Naive thymus-derived CD4-positive, alpha-beta T cell (primary cell): ENCODE measurements at regions of chr7 and their contacts with region 1.

Region 1: GRCh38 chr7:36001546-36001945 is 151.5 kb upstream of the EEPD1 start:
- DNase-seq: no peak
- ATAC-seq: no peak
- H3K4me3 ChIP-seq: no peak overlapping the region
- H3K4me3 Mint-ChIP-seq: no peak overlapping the region
- H3K27ac ChIP-seq: no peak overlapping the region
- H3K27ac Mint-ChIP-seq: no peak overlapping the region
- H3K4me1 ChIP-seq: no peaks in the 10 kb centered on the region
- H3K4me1 Mint-ChIP-seq: peaks cover 0 to 6% (median 6%) of the 10 kb centered on the region in 7 donors
- H3K27me3 ChIP-seq: no peaks in the 10 kb centered on the region
- H3K27me3 Mint-ChIP-seq: peaks cover 0 to 10% (median 0%) of the 10 kb centered on the region in 5 donors

Region 2: GRCh38 chr7:36109013-36109627 is 107.6 kb after region 1 on chr7:
- CTCF ChIA-PET with region 1: no interaction called
- POLR2A ChIA-PET with region 1: no interaction called
- intact Hi-C with region 1: loop called in 1 of 2 experiments (anchors 10 kb)
- DNase-seq: no peak
- ATAC-seq: no peak
- H3K4me3 ChIP-seq: no peak overlapping the region
- H3K4me3 Mint-ChIP-seq: no peak overlapping the region
- H3K27ac ChIP-seq: no peak overlapping the region
- H3K27ac Mint-ChIP-seq: no peak overlapping the region
- H3K4me1 ChIP-seq: no peaks in the 10 kb centered on the region
- H3K4me1 Mint-ChIP-seq: no peaks in the 10 kb centered on the region
- H3K27me3 ChIP-seq: no peaks in the 10 kb centered on the region
- H3K27me3 Mint-ChIP-seq: peaks cover 0 to 17% (median 0%) of the 10 kb centered on the region in 5 donors